ENCODE measurements at regions of chr16 and their contacts with region 1.

Region 1: DNA sequence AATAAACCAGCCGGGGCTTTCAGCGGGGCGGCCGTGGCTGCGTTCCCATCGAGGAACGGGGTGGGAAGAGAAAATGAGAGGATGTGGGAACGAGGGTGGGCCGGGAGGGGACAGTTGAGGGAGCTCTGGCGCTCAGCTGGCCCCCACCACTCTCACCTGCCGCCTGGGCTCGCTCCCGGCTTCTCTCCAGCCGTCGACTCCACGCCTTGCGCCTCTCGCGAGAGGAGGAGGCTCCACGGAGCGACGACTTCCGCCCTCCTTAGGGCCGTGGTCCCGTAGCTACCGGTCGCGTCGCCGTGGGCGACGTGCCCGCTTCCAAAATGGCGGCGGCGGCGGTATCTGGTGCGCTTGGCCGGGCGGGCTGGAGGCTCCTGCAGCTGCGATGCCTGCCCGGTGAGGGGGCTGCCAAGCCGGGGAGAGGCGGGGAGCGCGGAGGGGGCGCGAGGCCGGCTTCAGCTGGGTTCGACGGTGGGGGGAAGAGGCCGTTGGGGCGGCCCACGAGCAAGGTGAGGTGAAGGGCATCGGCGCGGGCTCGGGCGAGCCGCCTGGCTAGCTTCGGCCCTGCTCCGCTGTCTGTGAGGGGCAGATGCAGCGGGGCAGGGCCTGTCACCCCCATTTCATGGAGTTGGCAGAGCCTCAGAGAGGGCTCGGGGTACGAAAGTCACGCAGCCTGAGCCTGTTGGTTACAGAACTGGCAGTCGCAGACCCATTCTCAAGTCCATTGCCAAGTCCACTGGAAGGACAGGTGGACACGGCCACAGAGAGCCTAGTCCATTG is at the starts of genes CIAPIN1 and COQ9:
- DNase-seq: peak; percentile 90
- H3K4me3 Mint-ChIP-seq: peak within 1 kb of the TSS; percentile 94
- H3K27ac Mint-ChIP-seq: peak within 1 kb of the TSS; percentile 90
- H3K4me1 Mint-ChIP-seq: peaks cover 37% of the 10 kb centered on the region
- H3K27me3 Mint-ChIP-seq: no peaks in the 10 kb centered on the region
- total RNA-seq, gene CIAPIN1: 98.0 and 98.4 TPM in 2 replicates
- total RNA-seq, gene COQ9: 51.2 and 51.6 TPM in 2 replicates

Region 2: DNA sequence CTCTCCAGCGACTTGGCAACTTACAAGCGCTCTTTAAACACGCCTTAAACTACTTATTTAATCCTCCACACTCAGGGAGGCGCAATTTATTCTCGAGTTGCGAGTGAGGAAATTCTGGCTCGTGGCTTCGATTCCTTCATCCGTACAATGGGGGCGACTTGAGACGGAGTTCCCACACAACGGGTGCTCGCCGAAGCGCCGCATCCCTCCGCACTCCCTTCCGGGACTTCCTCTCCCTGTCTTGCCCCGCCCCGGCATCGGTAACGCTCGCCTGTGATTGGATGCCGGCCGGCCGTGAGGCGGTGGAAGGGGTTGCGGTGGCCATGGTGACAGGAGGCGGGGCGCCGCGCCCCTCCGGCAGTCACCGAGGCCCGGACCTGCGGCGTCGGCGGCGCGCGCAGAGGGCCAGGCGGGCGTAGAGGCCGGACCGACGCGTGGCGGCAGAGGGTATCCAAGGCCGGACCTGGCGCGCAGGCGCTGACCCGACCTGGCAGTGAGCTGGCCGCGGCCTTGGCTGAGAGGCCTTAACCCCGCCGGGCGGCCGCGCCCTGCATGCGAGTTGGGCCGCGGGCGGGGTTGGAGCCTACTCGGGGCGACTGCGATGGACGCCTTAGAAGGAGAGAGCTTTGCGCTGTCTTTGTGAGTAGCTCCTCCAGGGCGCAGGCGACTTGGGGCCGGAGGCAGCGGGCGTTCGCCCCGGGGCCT is 202.5 kb before region 1 on chr16 and contains the start of gene ARL2BP:
- intact Hi-C with region 1: loop called (anchors 1 kb)
- DNase-seq: peak; percentile 98
- H3K4me3 Mint-ChIP-seq: peak within 1 kb of the TSS; percentile 90
- H3K27ac Mint-ChIP-seq: peak within 1 kb of the TSS; percentile 82
- H3K4me1 Mint-ChIP-seq: peaks cover 18% of the 10 kb centered on the region
- H3K27me3 Mint-ChIP-seq: no peaks in the 10 kb centered on the region
- total RNA-seq, gene ARL2BP: 29.1 and 29.7 TPM in 2 replicates

Region 3: DNA sequence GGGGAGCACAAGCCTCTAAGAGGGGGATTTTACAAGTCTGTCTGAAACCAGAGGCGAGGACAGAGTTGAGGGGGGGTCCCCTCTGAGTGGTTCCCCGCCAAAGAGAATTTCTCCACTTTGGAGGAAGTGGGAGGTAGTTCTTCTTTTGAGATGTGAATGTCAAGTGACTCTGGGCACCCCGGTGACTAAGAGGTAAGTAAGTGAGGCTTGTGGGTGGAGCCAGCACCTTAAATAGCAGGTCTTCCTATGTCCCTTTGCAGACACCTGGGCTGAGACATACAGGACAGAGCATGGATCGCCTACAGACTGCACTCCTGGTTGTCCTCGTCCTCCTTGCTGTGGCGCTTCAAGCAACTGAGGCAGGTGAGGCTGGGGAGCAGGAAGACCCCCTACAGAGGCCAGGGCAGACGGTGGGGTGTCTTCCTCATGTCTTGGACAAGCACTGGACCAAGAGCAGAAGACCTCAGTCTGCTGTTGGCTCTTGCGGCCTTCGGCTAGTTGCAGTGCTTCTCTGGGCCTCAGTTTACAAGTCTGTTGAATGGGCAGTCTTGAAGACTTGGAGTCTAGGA is 88.8 kb before region 1 on chr16 and contains the start of gene CCL22:
- intact Hi-C with region 1: no loop called
- DNase-seq: no peak
- H3K4me3 Mint-ChIP-seq: no peak within 1 kb of the TSS
- H3K27ac Mint-ChIP-seq: no peak within 1 kb of the TSS
- H3K4me1 Mint-ChIP-seq: peaks cover 11% of the 10 kb centered on the region
- H3K27me3 Mint-ChIP-seq: peaks cover 3% of the 10 kb centered on the region
- total RNA-seq, gene CCL22: 11.4 and 11.5 TPM in 2 replicates

Region 4: GRCh38 chr16:57475711-57476339 is 28.5 kb after region 1 on chr16:
- intact Hi-C with region 1: loop called (anchors 1 kb)
- DNase-seq: peak; percentile 81
- H3K4me3 Mint-ChIP-seq: peak overlapping the region; percentile 45
- H3K27ac Mint-ChIP-seq: peak overlapping the region; percentile 52
- H3K4me1 Mint-ChIP-seq: peaks cover 18% of the 10 kb centered on the region
- H3K27me3 Mint-ChIP-seq: no peaks in the 10 kb centered on the region

Region 5: GRCh38 chr16:57519796-57520360 is 72.5 kb after region 1 on chr16:
- intact Hi-C with region 1: loop called (anchors 1 kb)
- DNase-seq: peak; percentile 69
- H3K4me3 Mint-ChIP-seq: no peak overlapping the region
- H3K27ac Mint-ChIP-seq: peak overlapping the region; percentile 65
- H3K4me1 Mint-ChIP-seq: peaks cover 21% of the 10 kb centered on the region
- H3K27me3 Mint-ChIP-seq: no peaks in the 10 kb centered on the region

Measured in activated T-helper 1 cell treated with anti-CD3 and anti-CD28 coated beads, Interleukin-12 subunit alpha, Interleukin-12 subunit beta, Interleukin-2, Interleukin-4 antibody, amounts not matched to agents 30 ng/mL and 10 ng/mL and 1 ng/mL, durations not matched to agents 14 hours and 24 hours and 36 hours (primary cell).